CD4-positive, alpha-beta T cell (primary cell): ENCODE measurements at regions of chr14 and their contacts with region 1.

Region 1: DNA sequence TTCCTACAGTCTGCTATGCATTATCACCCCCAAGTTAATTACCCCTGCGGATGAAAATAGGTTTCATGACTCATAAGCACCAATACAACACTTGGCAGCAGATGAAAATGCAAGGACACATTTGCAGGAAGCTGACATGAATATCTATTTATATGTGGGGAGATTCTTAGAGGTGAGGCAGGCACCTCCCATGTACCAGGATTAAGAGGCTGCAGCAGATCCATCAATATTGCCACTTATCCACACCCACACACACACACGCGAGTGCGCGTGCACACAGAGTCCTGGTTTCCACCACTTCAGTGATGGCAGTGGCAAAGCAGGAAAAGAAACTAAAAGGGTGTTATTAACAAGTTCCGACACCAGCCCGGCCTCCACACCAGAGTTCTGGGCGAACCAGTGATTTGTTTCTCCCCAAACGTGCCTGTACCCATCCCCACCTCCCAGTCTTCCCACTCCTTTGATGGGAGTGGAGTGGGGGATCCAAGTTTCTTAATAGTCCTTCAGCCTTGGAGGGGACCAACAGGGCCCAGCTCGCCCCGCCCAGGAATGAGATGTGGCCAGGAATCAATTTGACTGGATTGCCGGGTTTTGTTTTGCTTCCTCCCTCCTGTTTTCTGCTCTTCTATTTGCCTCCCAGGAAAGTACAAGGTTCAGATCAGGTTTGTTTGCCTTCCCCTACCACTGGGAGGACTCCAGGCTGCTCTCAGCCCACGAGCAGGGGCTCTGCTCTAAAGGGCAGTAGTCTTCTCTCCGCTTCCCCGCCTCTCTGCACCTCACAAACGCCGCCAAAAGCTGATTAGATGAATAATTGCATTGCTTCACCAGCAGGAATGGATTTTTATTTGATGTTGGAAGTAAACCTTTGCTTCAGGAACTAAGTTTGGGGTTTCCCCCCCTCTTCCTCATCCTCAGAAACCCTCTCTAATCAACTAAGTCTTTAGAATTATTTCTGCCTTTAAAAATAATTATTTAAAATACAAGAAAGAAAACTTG is 5.2 kb downstream of the IRF2BPL start:
- DNase-seq: peak in 1 of 14 experiments; percentile 33
- ATAC-seq: no peak
- H3K4me3 ChIP-seq: no peak overlapping the region
- H3K4me3 Mint-ChIP-seq: peak overlapping the region; percentile 69
- H3K27ac ChIP-seq: no peak overlapping the region
- H3K27ac Mint-ChIP-seq: peak overlapping the region; percentile 90
- H3K4me1 ChIP-seq: peaks cover 54% of the 10 kb centered on the region
- H3K4me1 Mint-ChIP-seq: peaks cover 36% of the 10 kb centered on the region
- H3K27me3 ChIP-seq: no peaks in the 10 kb centered on the region
- H3K27me3 Mint-ChIP-seq: no peaks in the 10 kb centered on the region
- CTCF ChIP-seq: no peak

Region 2: DNA sequence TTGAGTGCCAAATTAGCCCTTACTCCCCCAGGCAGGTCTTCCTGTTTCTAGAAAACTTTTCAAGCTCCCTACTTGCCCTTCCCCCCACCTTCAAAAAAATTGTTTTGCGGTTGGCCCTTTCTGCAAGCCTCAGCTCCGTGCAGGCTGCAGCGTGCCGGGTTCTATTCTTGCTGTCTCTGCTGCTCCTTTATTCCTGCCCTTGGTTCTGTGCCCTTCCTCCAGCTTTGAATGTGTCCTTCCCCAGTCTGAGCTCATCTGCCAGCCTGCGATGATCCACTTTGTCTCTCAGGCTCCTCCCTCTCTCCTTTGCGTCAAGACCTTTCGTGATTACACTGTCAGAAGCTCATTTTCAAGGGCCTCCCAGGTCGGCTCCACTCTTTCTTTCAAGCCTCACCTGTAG is 93.4 kb before region 1 on chr14:
- CTCF ChIA-PET with region 1: interaction called, 4 read pairs
- POLR2A ChIA-PET with region 1: interaction called, 19 read pairs
- intact Hi-C with region 1: no loop called
- DNase-seq: peak; percentile 40 to 92 (median 60)
- ATAC-seq: peak; percentile 84
- H3K4me3 ChIP-seq: peak overlapping the region; percentile 20
- H3K4me3 Mint-ChIP-seq: peak overlapping the region; percentile 68
- H3K27ac ChIP-seq: peak overlapping the region; percentile 43 to 52
- H3K27ac Mint-ChIP-seq: peak overlapping the region; percentile 86
- H3K4me1 ChIP-seq: peaks cover 78% of the 10 kb centered on the region
- H3K4me1 Mint-ChIP-seq: peaks cover 75% of the 10 kb centered on the region
- H3K27me3 ChIP-seq: no peaks in the 10 kb centered on the region
- H3K27me3 Mint-ChIP-seq: no peaks in the 10 kb centered on the region
- CTCF ChIP-seq: no peak